CD8-positive, alpha-beta T cell (primary cell): ENCODE measurements at regions of chr2 and their contacts with region 1.

Region 1: DNA sequence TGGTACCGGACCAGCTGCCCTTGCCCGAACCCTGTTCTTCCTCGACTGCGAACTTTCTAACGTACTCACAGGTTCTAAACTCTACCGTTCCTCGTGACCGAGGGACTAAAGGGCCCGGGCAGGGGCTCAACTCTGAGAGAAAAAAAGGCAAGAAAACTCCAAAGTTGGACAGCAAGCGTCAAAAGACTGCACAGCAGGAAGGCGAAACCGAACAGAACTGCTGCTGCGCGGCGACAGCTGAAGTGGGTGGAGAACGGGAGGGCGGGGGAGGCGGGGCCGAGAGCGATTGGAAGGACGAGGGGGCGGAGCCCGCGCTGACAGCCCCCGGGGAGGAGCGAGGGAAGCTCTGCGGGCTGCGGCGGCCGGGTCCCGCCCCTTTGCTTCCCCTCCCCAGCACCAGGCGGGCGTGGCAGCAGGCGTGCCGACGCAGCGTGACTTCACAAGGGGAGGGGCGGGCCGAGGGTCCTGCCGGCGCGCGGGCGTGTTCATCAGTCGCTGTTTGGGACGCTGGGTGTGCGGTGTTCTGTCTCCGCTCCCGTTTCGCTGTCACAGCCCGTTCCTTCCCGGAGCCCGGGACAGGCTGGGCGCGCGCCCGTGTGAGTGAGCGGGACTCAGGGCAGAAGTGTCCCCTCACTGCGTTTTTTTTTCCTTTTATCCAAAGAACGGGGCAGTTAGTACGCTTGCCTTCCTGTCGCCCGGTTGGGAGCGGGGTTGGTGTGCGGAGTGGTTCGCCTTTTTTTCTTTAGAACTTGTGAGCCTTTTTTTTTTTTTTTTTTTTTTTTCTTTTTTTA is at the start of gene NABP1:
- DNase-seq: peak; percentile 98 to 99 (median 99)
- ATAC-seq: peak; percentile 87
- H3K4me3 ChIP-seq: peak within 1 kb of the TSS; percentile 84 to 87
- H3K4me3 Mint-ChIP-seq: peak within 1 kb of the TSS; percentile 98
- H3K27ac ChIP-seq: peak within 1 kb of the TSS; percentile 95
- H3K27ac Mint-ChIP-seq: peak within 1 kb of the TSS; percentile 99
- H3K4me1 ChIP-seq: peaks cover 47% of the 10 kb centered on the region
- H3K4me1 Mint-ChIP-seq: peaks cover 66% of the 10 kb centered on the region
- H3K27me3 ChIP-seq: no peaks in the 10 kb centered on the region
- H3K27me3 Mint-ChIP-seq: no peaks in the 10 kb centered on the region
- CTCF ChIP-seq: no peak
- total RNA-seq, gene NABP1: 17.5 to 21.1 TPM

Region 2: GRCh38 chr2:189783927-189784867 is 1893.6 kb before region 1 on chr2 and contains the starts of genes ORMDL1 and PMS1:
- CTCF ChIA-PET with region 1: no interaction called
- POLR2A ChIA-PET with region 1: no interaction called
- intact Hi-C with region 1: loop called in 1 of 2 experiments (anchors 10 kb)
- DNase-seq: peak; percentile 86 to 98 (median 95)
- ATAC-seq: peak; percentile 89
- H3K4me3 ChIP-seq: peak within 1 kb of the TSS; percentile 56 to 91
- H3K4me3 Mint-ChIP-seq: peak within 1 kb of the TSS; percentile 97
- H3K27ac ChIP-seq: peak within 1 kb of the TSS; percentile 96 to 97
- H3K27ac Mint-ChIP-seq: peak within 1 kb of the TSS; percentile 97
- H3K4me1 ChIP-seq: peaks cover 45% of the 10 kb centered on the region
- H3K4me1 Mint-ChIP-seq: peaks cover 65% of the 10 kb centered on the region
- H3K27me3 ChIP-seq: no peaks in the 10 kb centered on the region
- H3K27me3 Mint-ChIP-seq: no peaks in the 10 kb centered on the region
- CTCF ChIP-seq: no peak
- total RNA-seq, gene ORMDL1: 105 to 107 TPM
- total RNA-seq, gene PMS1: 12.2 to 15.1 TPM

Region 3: GRCh38 chr2:191013932-191014652 is 663.7 kb before region 1 on chr2 and contains the start of gene STAT1:
- CTCF ChIA-PET with region 1: no interaction called
- POLR2A ChIA-PET with region 1: no interaction called
- intact Hi-C with region 1: loop called in 1 of 2 experiments (anchors 2 kb)
- DNase-seq: peak; percentile 93 to 98 (median 96)
- ATAC-seq: peak; percentile 87
- H3K4me3 ChIP-seq: peak within 1 kb of the TSS; percentile 61 to 88
- H3K4me3 Mint-ChIP-seq: no peak within 1 kb of the TSS
- H3K27ac ChIP-seq: peak within 1 kb of the TSS; percentile 91 to 94
- H3K27ac Mint-ChIP-seq: no peak within 1 kb of the TSS
- H3K4me1 ChIP-seq: peaks cover 59% of the 10 kb centered on the region
- H3K4me1 Mint-ChIP-seq: peaks cover 44% of the 10 kb centered on the region
- H3K27me3 ChIP-seq: no peaks in the 10 kb centered on the region
- H3K27me3 Mint-ChIP-seq: no peaks in the 10 kb centered on the region
- CTCF ChIP-seq: no peak
- total RNA-seq, gene STAT1: 66.7 to 69.9 TPM

Region 4: GRCh38 chr2:191066197-191066918 is 611.5 kb before region 1 on chr2:
- CTCF ChIA-PET with region 1: no interaction called
- POLR2A ChIA-PET with region 1: interaction called, 3 read pairs
- intact Hi-C with region 1: loop called in 1 of 2 experiments (anchors 10 kb)
- DNase-seq: peak in 1 of 9 experiments; percentile 46
- ATAC-seq: no peak
- H3K4me3 ChIP-seq: peak overlapping the region in 1 of 2 experiments; percentile 48
- H3K4me3 Mint-ChIP-seq: peak overlapping the region; percentile 75
- H3K27ac ChIP-seq: peak overlapping the region; percentile 4 to 62
- H3K27ac Mint-ChIP-seq: peak overlapping the region; percentile 86
- H3K4me1 ChIP-seq: peaks cover 76% of the 10 kb centered on the region
- H3K4me1 Mint-ChIP-seq: peaks cover 84% of the 10 kb centered on the region
- H3K27me3 ChIP-seq: no peaks in the 10 kb centered on the region
- H3K27me3 Mint-ChIP-seq: no peaks in the 10 kb centered on the region
- CTCF ChIP-seq: no peak

Region 5: GRCh38 chr2:191617575-191617974 is 60.3 kb before region 1 on chr2:
- CTCF ChIA-PET with region 1: interaction called, 4 read pairs
- POLR2A ChIA-PET with region 1: interaction called, 95 read pairs
- intact Hi-C with region 1: loop called (anchors 1 kb)
- DNase-seq: peak; percentile 10 to 93 (median 49)
- ATAC-seq: peak; percentile 92
- H3K4me3 ChIP-seq: no peak overlapping the region
- H3K4me3 Mint-ChIP-seq: peak overlapping the region; percentile 42
- H3K27ac ChIP-seq: peak overlapping the region; percentile 12 to 76
- H3K27ac Mint-ChIP-seq: peak overlapping the region; percentile 86
- H3K4me1 ChIP-seq: peaks cover 26% of the 10 kb centered on the region
- H3K4me1 Mint-ChIP-seq: peaks cover 42% of the 10 kb centered on the region
- H3K27me3 ChIP-seq: no peaks in the 10 kb centered on the region
- H3K27me3 Mint-ChIP-seq: no peaks in the 10 kb centered on the region
- CTCF ChIP-seq: no peak

Region 6: DNA sequence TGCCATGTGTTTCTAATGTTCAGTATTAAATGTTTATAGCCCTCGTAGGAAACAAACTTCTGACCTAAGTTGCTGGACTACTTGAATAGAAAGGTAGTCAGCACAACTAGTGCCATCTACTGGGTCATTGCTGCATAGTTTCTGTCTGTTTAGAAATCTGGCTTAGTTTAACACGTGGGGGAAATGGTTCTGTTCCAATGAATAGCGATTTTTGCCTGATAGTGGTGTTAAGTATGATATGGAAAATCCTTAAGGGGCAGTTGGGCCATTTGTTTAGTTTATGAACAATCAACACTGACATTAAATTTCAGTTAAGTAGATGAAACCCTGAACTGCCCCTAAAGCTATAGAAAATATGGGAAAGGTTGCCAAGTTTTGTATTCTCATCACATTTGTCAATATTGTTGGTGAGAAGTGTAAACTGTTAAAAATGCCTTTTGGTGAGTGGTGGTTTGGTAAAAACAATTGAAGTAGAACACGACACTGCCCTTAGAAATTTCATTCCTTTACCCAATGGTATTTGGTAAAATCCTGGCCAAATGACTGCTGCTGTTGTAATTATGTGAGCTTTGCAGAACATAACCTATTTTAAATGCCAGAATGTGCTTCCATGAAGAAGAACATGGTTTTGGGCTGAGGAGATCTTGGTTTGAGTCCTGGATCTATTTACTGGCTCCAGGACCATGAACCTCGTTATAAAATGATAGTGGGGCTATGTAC is 13.3 kb after region 1 on chr2:
- CTCF ChIA-PET with region 1: interaction called, 7 read pairs
- POLR2A ChIA-PET with region 1: interaction called, 11 read pairs
- intact Hi-C with region 1: loop called in 1 of 2 experiments (anchors 1 kb)
- DNase-seq: peak in 7 of 9 experiments; percentile 9 to 85 (median 48)
- ATAC-seq: peak; percentile 93
- H3K4me3 ChIP-seq: no peak overlapping the region
- H3K4me3 Mint-ChIP-seq: no peak overlapping the region
- H3K27ac ChIP-seq: no peak overlapping the region
- H3K27ac Mint-ChIP-seq: peak overlapping the region; percentile 65
- H3K4me1 ChIP-seq: peaks cover 7% of the 10 kb centered on the region
- H3K4me1 Mint-ChIP-seq: peaks cover 10% of the 10 kb centered on the region
- H3K27me3 ChIP-seq: no peaks in the 10 kb centered on the region
- H3K27me3 Mint-ChIP-seq: no peaks in the 10 kb centered on the region
- CTCF ChIP-seq: peak; percentile 81